ENCODE measurements at regions of chr1 and their contacts with region 1.

Region 1: GRCh38 chr1:204128964-204129896 is 22.6 kb downstream of the ETNK2 start:
- DNase-seq: peak; percentile 77
- ATAC-seq: peak; percentile 80
- H3K4me3 Mint-ChIP-seq: peak overlapping the region; percentile 57
- H3K27ac Mint-ChIP-seq: peak overlapping the region; percentile 85
- H3K4me1 Mint-ChIP-seq: peaks cover 47% of the 10 kb centered on the region
- H3K27me3 Mint-ChIP-seq: no peaks in the 10 kb centered on the region
- CTCF ChIP-seq: peak; percentile 97

Region 2: DNA sequence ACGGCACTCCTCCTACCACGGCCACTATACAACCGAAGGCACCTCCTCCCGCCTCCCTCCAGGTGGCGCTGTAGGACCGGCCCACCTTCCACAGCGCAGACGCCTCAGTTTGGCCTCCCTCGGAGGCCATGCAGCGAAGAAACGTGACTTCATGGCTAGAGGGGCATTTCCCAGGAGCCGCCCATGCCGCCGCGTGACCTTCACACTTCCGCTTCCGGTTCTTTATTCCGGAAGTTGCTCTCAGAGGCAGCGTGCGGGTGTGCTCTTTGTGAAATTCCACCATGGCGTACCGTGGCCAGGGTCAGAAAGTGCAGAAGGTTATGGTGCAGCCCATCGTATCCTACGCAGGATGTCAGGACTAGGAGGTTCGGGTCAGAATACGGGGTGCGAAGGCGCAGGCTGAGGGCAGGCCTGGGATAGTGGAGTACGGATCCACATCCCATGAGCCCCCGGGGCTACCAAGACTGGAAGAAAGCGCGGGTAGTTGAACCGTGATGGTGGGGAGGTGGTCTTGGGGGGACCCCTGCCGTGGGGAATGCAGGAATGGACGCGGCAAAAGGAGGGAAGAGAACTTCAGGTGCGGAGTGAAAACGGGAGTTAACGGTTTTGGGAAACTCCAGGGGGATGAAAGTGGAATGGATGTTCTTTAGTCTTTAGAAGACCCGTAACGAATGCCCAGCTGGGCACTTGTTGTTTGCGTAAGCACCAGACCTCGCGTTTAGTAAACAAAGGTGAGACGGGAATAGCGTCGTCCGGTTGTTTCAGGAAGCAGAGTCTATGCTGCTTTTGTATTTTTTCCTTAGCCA is 267.6 kb before region 1 on chr1 and contains the start of gene SNRPE:
- CTCF ChIA-PET with region 1: interaction called, 25 read pairs
- POLR2A ChIA-PET with region 1: interaction called, 3 read pairs
- DNase-seq: peak; percentile 96
- ATAC-seq: peak; percentile 95
- H3K4me3 Mint-ChIP-seq: peak within 1 kb of the TSS; percentile 94
- H3K27ac Mint-ChIP-seq: peak within 1 kb of the TSS; percentile 98
- H3K4me1 Mint-ChIP-seq: peaks cover 11% of the 10 kb centered on the region
- H3K27me3 Mint-ChIP-seq: peaks cover 3% of the 10 kb centered on the region
- CTCF ChIP-seq: peak; percentile 87
- total RNA-seq, gene SNRPE: 245 to 260 TPM (median 250 TPM) in 3 replicates

Region 3: GRCh38 chr1:204072931-204073836 is 56.0 kb before region 1 on chr1 and contains the start of gene SOX13:
- CTCF ChIA-PET with region 1: interaction called, 58 read pairs
- POLR2A ChIA-PET with region 1: interaction called, 14 read pairs
- DNase-seq: peak; percentile 84
- ATAC-seq: peak; percentile 78
- H3K4me3 Mint-ChIP-seq: peak within 1 kb of the TSS; percentile 99
- H3K27ac Mint-ChIP-seq: peak within 1 kb of the TSS; percentile 98
- H3K4me1 Mint-ChIP-seq: peaks cover 56% of the 10 kb centered on the region
- H3K27me3 Mint-ChIP-seq: peaks cover 2% of the 10 kb centered on the region
- CTCF ChIP-seq: no peak
- total RNA-seq, gene SOX13: 139 to 171 TPM (median 148 TPM) in 3 replicates

Region 4: DNA sequence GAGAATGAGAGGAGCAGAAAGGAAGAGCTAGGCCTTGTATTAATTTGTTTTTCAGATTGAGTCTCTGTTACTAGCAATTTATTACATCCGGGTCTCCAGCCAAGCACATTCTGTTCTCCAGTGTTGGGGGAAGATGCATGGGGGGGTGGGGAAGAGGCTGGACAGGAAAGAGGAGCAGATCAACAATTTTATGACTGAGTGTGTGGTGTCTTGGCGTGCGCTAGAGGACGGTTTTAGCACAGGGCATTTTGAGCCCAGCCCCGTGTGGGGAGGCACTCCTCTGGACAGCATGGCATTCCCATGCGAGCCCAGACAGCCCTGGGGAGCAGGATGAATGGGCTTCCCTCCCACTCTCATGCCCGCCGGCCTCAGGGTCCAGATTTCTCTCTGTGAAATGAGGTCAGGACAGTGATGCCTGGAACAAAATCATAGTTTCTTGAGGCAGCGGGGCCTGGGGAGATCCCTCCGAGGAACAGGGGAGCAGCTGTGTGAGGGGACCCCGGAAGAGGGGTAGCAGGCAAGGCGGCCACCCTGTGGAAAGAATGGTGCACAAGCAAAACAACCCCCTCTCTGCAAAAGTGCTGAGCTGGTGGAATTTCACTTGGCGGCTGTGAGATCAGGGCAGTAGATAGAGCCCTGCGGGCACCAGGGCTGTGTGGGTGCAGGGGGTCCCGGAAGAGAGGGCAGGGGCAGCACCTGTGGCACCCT is 40.0 kb before region 1 on chr1:
- CTCF ChIA-PET with region 1: interaction called, 17 read pairs
- POLR2A ChIA-PET with region 1: interaction called, 3 read pairs
- DNase-seq: no peak
- ATAC-seq: no peak
- H3K4me3 Mint-ChIP-seq: no peak overlapping the region
- H3K27ac Mint-ChIP-seq: peak overlapping the region; percentile 90
- H3K4me1 Mint-ChIP-seq: peaks cover 97% of the 10 kb centered on the region
- H3K27me3 Mint-ChIP-seq: no peaks in the 10 kb centered on the region
- CTCF ChIP-seq: no peak

Region 5: DNA sequence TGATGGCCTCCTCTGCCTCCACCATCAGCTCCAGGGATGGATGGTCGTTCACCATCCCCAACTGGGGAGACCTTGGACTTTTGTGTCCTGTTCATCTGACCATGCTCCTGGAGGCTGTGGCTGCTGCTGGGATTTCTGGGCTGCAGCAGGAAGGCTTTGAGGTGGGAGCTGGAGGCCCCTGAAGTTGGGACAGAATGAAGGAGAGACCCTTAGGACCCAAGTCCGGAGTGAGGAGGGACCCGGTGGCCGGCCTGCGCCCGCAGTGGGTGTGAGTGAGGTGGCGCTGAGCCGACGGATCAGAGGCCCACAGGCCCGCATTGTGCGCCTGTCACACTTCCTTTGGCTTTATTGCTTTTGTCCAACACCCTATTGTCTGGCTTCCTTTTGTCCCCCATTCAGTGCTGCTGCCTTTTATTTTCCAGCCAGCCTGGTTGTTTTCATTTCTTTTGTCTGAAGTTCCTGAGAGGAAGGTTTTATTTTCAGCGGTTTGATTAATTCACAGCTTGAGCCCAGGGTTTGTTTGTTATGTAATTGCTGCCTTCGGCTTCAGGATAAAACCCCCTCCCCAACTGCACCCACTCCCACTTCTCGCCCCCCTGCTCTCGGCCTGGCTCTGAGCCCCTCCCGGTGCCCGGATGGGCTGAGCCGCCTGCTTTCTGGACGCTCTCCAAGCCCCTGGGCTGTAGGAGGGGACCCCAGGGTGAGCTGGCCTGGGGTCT is 20.6 kb before region 1 on chr1:
- CTCF ChIA-PET with region 1: interaction called, 25 read pairs
- POLR2A ChIA-PET with region 1: interaction called, 4 read pairs
- DNase-seq: peak; percentile 66
- ATAC-seq: peak; percentile 76
- H3K4me3 Mint-ChIP-seq: peak overlapping the region; percentile 57
- H3K27ac Mint-ChIP-seq: peak overlapping the region; percentile 96
- H3K4me1 Mint-ChIP-seq: peaks cover 79% of the 10 kb centered on the region
- H3K27me3 Mint-ChIP-seq: no peaks in the 10 kb centered on the region
- CTCF ChIP-seq: no peak

Region 6: GRCh38 chr1:204142032-204142974 is 13.1 kb after region 1 on chr1:
- CTCF ChIA-PET with region 1: interaction called, 15 read pairs
- POLR2A ChIA-PET with region 1: interaction called, 4 read pairs
- DNase-seq: no peak
- ATAC-seq: 0 out of 2 replicates have a peak, but pooled peaks have one; percentile 6
- H3K4me3 Mint-ChIP-seq: no peak overlapping the region
- H3K27ac Mint-ChIP-seq: no peak overlapping the region
- H3K4me1 Mint-ChIP-seq: peaks cover 14% of the 10 kb centered on the region
- H3K27me3 Mint-ChIP-seq: peaks cover 11% of the 10 kb centered on the region
- CTCF ChIP-seq: no peak

Region 7: GRCh38 chr1:204188982-204189646 is 59.9 kb after region 1 on chr1:
- CTCF ChIA-PET with region 1: no interaction called
- POLR2A ChIA-PET with region 1: no interaction called
- DNase-seq: no peak
- ATAC-seq: no peak
- H3K4me3 Mint-ChIP-seq: no peak overlapping the region
- H3K27ac Mint-ChIP-seq: no peak overlapping the region
- H3K4me1 Mint-ChIP-seq: peaks cover 8% of the 10 kb centered on the region
- H3K27me3 Mint-ChIP-seq: peaks cover 66% of the 10 kb centered on the region
- CTCF ChIP-seq: no peak